Activated CD8-positive, alpha-beta T cell treated with anti-CD3 and anti-CD28 coated beads, Interleukin-2, amount 10 ng/mL, durations not matched to agents 7 days and 5 days (primary cell): ENCODE measurements at regions of chr20 and their contacts with region 1.

Region 1: DNA sequence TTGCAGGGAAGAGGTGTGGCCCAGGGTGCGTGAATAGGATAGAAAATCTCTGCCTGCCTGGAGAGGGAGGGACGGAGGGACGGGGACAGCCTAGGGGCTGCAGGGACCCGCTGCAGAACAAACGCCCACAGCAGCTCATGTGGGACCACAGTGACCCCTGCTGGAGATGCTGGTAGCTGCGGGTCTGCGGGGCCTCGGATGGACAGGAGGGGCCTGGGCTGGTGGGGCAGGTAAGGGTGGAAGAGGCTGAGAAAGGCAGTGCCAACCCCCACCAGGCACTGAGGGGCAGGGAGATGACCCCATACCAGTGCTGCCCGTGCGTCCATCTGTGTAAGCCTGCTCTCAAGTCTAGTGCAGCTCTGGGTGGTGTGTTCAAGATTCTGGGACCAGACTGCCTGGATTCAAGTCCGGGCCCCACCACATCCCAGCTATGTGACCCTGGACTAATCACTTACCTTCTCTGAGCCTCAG is 39.4 kb downstream of the KIAA1755 start:
- DNase-seq: peak; percentile 77
- ATAC-seq: peak; percentile 78
- H3K4me3 Mint-ChIP-seq: no peak overlapping the region
- H3K27ac Mint-ChIP-seq: no peak overlapping the region
- H3K4me1 Mint-ChIP-seq: peaks cover 3% of the 10 kb centered on the region
- H3K27me3 Mint-ChIP-seq: no peaks in the 10 kb centered on the region

Region 2: DNA sequence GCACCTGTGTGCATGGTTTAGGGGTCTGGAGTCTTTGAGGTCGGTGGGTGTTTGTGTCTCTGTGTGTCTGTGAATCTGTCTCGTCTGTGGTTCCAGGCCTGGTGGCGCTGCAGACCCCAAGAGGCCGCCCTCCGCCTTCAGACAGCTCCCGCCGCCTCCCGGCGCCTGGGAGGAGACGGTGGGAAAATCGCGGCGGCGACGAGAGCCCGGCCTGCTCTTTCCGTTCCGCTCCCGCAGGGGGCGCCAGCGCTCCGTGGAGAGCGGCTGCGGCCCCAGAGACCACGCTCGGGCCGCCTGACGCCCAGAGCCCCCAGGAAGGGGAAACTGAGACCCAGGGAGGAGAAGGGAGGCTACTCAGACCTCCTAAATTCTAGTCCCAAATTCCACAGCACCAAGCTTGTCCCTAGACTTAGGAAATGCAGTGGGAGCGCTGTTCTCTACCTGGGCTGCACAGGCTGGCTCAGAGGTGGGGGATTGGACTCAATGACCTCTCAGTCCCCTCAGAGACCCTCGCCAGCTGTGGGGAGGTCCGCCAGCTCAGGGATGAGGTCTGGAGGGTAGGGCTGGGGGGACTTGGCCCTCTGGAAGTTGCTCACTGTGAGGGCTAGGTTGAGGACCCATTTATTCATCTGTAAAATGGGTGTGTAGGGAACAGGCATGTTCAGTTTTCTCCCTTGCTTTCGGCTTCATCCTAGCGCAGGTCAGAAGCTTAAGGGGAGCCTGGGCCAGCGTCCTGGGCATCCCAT is 656.6 kb before region 1 on chr20:
- CTCF ChIA-PET with region 1: interaction called, 13 read pairs
- POLR2A ChIA-PET with region 1: no interaction called
- DNase-seq: peak; percentile 50
- ATAC-seq: peak; percentile 73
- H3K4me3 Mint-ChIP-seq: no peak overlapping the region
- H3K27ac Mint-ChIP-seq: no peak overlapping the region
- H3K4me1 Mint-ChIP-seq: no peaks in the 10 kb centered on the region
- H3K27me3 Mint-ChIP-seq: peaks cover 34% of the 10 kb centered on the region

Region 3: GRCh38 chr20:38057351-38057972 is 163.7 kb before region 1 on chr20:
- CTCF ChIA-PET with region 1: interaction called, 93 read pairs
- POLR2A ChIA-PET with region 1: interaction called, 3 read pairs
- DNase-seq: peak; percentile 83
- ATAC-seq: peak; percentile 92
- H3K4me3 Mint-ChIP-seq: no peak overlapping the region
- H3K27ac Mint-ChIP-seq: peak overlapping the region; percentile 76
- H3K4me1 Mint-ChIP-seq: peaks cover 14% of the 10 kb centered on the region
- H3K27me3 Mint-ChIP-seq: no peaks in the 10 kb centered on the region

Region 4: DNA sequence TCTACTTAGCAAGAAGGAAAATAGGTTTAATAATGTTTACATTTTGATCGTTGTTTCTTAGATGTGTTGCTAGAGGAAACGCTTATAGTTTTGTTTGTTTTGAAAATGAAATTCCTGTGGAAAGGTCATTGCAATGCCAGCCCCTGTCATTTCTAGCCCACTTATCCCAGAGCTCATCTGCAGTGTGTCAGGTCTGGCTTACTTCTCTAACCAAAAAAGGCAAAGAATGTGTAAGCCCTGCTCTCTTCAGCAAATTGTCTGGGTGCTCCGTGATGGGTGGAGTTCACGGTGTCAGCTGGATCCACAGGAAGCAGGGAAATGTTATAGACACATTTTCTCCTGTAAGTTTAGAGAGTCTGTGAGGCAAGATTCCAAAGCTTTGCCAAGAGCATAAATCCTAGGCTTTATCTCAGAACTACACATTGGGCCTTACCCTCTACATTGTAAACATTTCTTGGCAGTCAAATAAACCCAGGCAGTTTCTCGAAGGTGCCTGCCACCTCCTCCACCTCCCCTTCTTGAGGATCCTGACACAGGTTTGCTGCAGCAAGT is 136.7 kb before region 1 on chr20:
- CTCF ChIA-PET with region 1: interaction called, 12 read pairs
- POLR2A ChIA-PET with region 1: no interaction called
- DNase-seq: no peak
- ATAC-seq: no peak
- H3K4me3 Mint-ChIP-seq: no peak overlapping the region
- H3K27ac Mint-ChIP-seq: no peak overlapping the region
- H3K4me1 Mint-ChIP-seq: no peaks in the 10 kb centered on the region
- H3K27me3 Mint-ChIP-seq: no peaks in the 10 kb centered on the region

Region 5: GRCh38 chr20:38242848-38243449 is 21.8 kb after region 1 on chr20:
- CTCF ChIA-PET with region 1: interaction called, 11 read pairs
- POLR2A ChIA-PET with region 1: no interaction called
- DNase-seq: peak; percentile 30
- ATAC-seq: no peak
- H3K4me3 Mint-ChIP-seq: no peak overlapping the region
- H3K27ac Mint-ChIP-seq: no peak overlapping the region
- H3K4me1 Mint-ChIP-seq: no peaks in the 10 kb centered on the region
- H3K27me3 Mint-ChIP-seq: no peaks in the 10 kb centered on the region